ENCODE measurements at regions of chr2 and their contacts with region 1.

Region 1: GRCh38 chr2:71226965-71227560 is at the start of gene PAIP2B:
- DNase-seq: peak; percentile 99
- H3K4me3 ChIP-seq: peak within 1 kb of the TSS; percentile 73
- H3K27ac ChIP-seq: peak within 1 kb of the TSS; percentile 75
- H3K4me1 ChIP-seq: peaks cover 32% of the 10 kb centered on the region
- CTCF ChIP-seq: no peak
- total RNA-seq, gene PAIP2B: 2.6 and 3.0 TPM in 2 replicates

Region 2: GRCh38 chr2:71068218-71069035 is 158.6 kb before region 1 on chr2 and contains the start of gene NAGK:
- CTCF ChIA-PET with region 1: no interaction called
- POLR2A ChIA-PET with region 1: interaction called, 6 read pairs
- intact Hi-C with region 1: loop called (anchors 5 kb)
- DNase-seq: peak; percentile 96
- H3K4me3 ChIP-seq: peak within 1 kb of the TSS; percentile 94
- H3K27ac ChIP-seq: peak within 1 kb of the TSS; percentile 99
- H3K4me1 ChIP-seq: peaks cover 80% of the 10 kb centered on the region
- CTCF ChIP-seq: peak; percentile 33; the same call in 1 of the 2 replicates
- total RNA-seq, gene NAGK: 79.7 and 97.8 TPM in 2 replicates

Region 3: GRCh38 chr2:71130113-71130904 is 96.8 kb before region 1 on chr2 and contains the starts of genes MCEE and MPHOSPH10:
- CTCF ChIA-PET with region 1: no interaction called
- POLR2A ChIA-PET with region 1: no interaction called
- intact Hi-C with region 1: loop called (anchors 2 kb)
- DNase-seq: peak; percentile 90
- H3K4me3 ChIP-seq: peak within 1 kb of the TSS; percentile 95
- H3K27ac ChIP-seq: peak within 1 kb of the TSS; percentile 80
- H3K4me1 ChIP-seq: peaks cover 37% of the 10 kb centered on the region
- CTCF ChIP-seq: no peak
- total RNA-seq, gene MCEE: 30.8 and 35.4 TPM in 2 replicates
- total RNA-seq, gene MPHOSPH10: 18.7 and 31.5 TPM in 2 replicates

Region 4: DNA sequence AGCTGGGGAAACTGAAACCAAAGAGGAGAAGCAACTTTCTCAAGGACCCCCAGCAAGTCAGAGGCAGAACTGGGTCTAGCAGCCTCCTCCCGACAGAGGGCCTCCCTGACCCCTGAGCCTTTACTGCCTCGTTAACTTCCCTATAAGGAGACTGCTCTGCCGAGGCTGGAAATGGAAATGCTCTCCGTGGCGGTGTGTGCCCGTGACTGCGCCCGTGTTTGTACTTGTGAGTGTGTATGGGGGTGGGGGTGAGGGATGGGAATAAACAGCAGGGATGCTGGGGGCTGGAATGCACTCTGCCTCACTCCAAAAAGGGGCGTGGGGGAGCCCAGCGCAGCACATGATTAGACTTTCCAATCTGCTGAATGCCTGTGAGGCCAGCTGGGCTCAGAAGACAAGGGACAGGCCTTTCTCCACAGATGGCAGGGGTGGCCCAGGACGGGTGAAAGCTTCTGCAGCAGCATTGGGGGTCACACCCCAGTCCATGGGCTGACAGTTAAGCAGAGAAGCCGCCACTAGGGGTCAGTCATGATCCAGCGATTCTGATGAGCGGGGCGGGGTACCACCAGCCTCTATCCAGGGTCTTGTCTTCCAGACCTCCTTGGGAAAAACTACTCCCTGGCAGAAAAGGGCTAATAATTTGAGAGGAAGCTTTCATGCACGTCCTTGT is 69.8 kb before region 1 on chr2:
- CTCF ChIA-PET with region 1: no interaction called
- POLR2A ChIA-PET with region 1: no interaction called
- intact Hi-C with region 1: loop called (anchors 2 kb)
- DNase-seq: peak; percentile 67
- H3K4me3 ChIP-seq: no peak overlapping the region
- H3K27ac ChIP-seq: no peak overlapping the region
- H3K4me1 ChIP-seq: no peaks in the 10 kb centered on the region
- CTCF ChIP-seq: peak; percentile 81

Region 5: DNA sequence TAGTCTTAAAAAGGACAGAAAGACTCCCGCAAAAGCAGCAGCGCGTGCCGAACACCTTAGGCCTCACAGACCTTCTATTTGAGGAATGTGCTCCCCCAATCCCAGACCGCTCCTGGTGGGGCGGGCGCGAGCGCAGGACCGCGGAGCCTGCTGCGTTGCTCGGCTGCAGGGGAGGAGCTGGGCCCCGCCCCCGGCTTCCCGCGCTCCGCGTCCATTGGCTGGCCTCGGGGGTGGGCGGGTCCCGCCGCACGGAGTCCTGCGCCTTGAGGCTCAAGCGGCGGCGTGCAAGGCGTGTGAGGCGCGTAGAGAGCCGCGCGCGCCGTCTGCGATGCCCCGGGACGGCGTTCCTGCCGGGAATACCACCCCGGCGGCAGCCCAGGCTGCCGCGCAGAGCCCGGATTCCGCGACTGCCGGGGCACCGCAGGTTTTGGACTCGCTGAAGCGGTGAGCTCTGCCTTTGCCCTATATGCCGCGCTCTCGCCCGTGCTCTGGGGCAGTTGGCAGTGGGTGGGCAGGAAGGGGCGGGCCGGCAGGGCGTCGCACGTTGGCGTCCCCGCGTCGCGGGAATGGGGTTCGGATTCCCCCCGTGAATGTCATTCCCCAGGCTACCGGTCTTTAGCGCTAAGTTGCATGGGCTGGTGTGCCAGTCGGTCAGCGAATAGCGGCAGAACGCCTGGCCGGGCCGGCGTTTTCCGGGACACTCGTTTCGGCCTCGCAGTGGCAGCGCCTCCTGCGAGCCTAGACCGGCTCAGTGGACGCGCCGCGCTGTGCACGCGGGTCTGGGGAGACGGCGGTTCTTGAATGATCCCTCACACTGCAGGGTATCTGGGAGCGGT is 49.5 kb after region 1 on chr2:
- CTCF ChIA-PET with region 1: no interaction called
- POLR2A ChIA-PET with region 1: interaction called, 11 read pairs
- intact Hi-C with region 1: loop called (anchors 1 kb)
- DNase-seq: peak; percentile 91
- H3K4me3 ChIP-seq: peak overlapping the region; percentile 72
- H3K27ac ChIP-seq: no peak overlapping the region
- H3K4me1 ChIP-seq: peaks cover 24% of the 10 kb centered on the region
- CTCF ChIP-seq: 0 out of 2 replicates have a peak, but pooled peaks have one; percentile 8

Region 6: GRCh38 chr2:71331581-71332434 is 104.7 kb after region 1 on chr2 and contains the start of gene ZNF638:
- CTCF ChIA-PET with region 1: interaction called, 3 read pairs
- POLR2A ChIA-PET with region 1: interaction called, 4 read pairs
- intact Hi-C with region 1: loop called (anchors 1 kb)
- DNase-seq: peak; percentile 96
- H3K4me3 ChIP-seq: peak within 1 kb of the TSS; percentile 91
- H3K27ac ChIP-seq: peak within 1 kb of the TSS; percentile 54
- H3K4me1 ChIP-seq: peaks cover 14% of the 10 kb centered on the region
- CTCF ChIP-seq: peak; percentile 76
- total RNA-seq, gene ZNF638: 138 and 165 TPM in 2 replicates

Region 7: DNA sequence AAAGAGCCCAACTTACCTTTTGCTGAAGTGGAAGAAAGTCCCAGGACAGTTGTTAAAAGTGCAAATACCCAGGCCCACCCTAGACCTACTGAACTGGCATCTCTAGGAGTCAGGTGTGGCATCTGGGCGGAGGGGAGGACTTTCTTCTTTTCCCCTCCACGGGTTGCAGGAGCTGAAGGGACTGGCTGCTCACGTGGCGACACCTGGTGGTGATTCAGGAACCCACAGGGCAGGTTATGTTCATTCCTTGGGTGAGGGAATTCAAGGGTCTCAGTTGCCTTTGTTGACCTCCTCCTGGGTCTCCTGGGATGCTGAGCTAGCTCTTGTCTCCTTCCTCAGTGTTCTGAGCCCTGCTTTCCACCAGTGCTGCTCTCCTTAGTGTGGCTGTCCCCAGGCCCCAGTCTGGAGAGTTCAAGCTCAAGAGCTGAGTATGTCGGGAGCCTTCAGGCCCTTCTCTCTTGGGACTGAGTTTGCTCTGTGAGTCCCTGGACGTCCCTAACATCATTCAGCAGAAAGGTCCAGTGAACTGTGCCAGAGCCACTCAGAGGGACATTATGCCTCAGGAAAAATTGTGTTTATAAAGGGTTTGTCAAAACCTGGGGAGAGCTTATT is 283.2 kb after region 1 on chr2:
- CTCF ChIA-PET with region 1: no interaction called
- POLR2A ChIA-PET with region 1: no interaction called
- intact Hi-C with region 1: loop called (anchors 1 kb)
- DNase-seq: peak; percentile 71
- H3K4me3 ChIP-seq: no peak overlapping the region
- H3K27ac ChIP-seq: no peak overlapping the region
- H3K4me1 ChIP-seq: no peaks in the 10 kb centered on the region
- CTCF ChIP-seq: peak; percentile 93

Measured in OCI-LY7 (cell line).